SK-N-SH (cell line): ENCODE measurements at regions of chr16 and their contacts with region 1.

Region 1: DNA sequence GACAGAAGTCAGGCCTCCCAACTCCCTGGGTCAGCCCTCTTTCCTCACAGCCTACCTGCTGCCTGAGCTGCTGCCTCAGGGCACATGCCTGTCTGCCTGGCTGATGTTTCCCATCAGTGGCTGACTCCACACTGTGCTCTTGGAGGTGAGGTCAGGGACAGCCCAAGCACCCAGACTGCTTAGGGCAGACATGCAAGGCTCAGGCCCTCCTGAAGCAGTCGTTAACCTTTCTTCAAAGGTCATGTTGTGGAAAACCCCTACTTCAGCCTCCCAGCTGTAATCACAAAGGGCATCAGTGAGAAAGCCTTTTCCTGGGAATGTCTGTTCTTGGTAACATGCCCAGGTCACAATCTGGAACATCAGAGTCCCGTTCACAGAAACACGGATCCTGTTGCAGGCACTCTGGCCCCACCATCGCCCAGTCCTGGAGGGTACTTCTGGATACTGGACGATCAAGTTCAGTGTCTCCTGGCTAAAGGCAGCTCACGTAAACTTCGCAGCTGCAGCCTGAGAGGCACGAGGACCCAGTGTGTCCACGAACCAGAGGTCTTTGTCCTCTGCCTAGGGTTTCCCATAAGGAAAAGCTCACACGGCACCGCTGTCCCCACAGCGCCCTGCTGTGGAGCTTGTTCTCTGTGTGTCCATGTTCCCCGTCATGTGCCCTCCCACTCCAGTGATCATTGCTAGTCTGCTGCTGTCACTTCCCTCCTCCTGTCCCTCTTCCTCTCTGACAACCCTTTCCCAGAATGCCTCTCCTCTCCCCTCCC is 54.9 kb downstream of the GNAO1 start:
- DNase-seq: peak; percentile 56
- H3K4me3 ChIP-seq: no peak overlapping the region
- H3K27ac ChIP-seq: peak overlapping the region in 1 of 2 experiments; percentile 92; a peak in 2 of 4 replicates
- H3K4me1 ChIP-seq: peaks cover 0 to 34% of the 10 kb centered on the region in 2 experiments; a peak in 1 of 4 replicates
- H3K27me3 ChIP-seq: no peaks in the 10 kb centered on the region
- CTCF ChIP-seq: no peak
- EP300 ChIP-seq: peak in 1 of 2 experiments; percentile 36; a peak in 1 of 4 replicates
- RAD21 ChIP-seq: peak; percentile 50

Region 2: DNA sequence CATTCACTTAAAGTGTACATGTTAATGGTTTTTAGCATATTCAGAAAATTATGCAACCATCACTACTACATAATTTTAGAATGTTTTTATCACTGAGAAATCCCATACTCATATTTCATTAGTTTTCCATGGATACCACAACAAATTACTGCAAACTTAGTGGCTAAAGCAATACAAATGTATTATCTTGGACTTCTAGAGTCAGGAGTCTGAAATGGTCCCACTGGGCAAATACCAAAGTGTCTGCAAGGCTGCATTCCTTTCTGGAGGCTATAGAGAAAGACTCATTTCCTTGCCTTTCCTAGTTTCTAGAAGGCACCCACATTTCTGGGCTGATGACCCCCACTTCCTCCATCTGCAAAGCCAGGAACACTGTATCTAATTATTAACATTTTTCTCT is 71.8 kb before region 1 on chr16:
- CTCF ChIA-PET with region 1: no interaction called
- POLR2A ChIA-PET with region 1: no interaction called
- DNase-seq: no peak
- H3K4me3 ChIP-seq: no peak overlapping the region
- H3K27ac ChIP-seq: no peak overlapping the region
- H3K4me1 ChIP-seq: no peaks in the 10 kb centered on the region
- H3K27me3 ChIP-seq: no peaks in the 10 kb centered on the region
- CTCF ChIP-seq: no peak
- EP300 ChIP-seq: no peak
- RAD21 ChIP-seq: no peak

Region 3: DNA sequence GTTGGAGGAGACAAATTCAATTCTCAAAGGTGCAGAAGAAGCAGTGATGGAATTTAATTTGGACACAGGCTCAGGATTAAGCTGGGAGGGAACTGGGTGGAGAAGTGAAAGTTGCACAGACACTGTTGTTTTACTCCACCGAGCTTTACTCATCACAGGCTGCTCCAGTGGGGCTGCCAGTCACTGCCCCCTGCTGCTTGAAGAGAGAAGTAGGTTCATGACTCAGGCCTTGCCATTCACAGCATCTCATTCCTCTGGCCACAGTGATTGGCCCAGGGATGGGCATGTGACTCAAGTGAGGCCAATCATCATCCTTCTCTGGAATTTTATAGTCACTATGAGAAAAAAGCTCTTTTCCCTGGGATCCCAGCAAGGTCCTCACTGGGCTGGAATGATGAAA is 43.2 kb before region 1 on chr16:
- CTCF ChIA-PET with region 1: interaction called, 12 read pairs
- POLR2A ChIA-PET with region 1: interaction called, 3 read pairs
- DNase-seq: peak; percentile 44
- H3K4me3 ChIP-seq: no peak overlapping the region
- H3K27ac ChIP-seq: no peak overlapping the region
- H3K4me1 ChIP-seq: peaks cover 0 to 3% of the 10 kb centered on the region in 2 experiments; a peak in 1 of 4 replicates
- H3K27me3 ChIP-seq: no peaks in the 10 kb centered on the region
- CTCF ChIP-seq: peak; percentile 37
- EP300 ChIP-seq: no peak
- RAD21 ChIP-seq: peak; percentile 50